Activated B cell treated with CpG ODN at 0.5 μM for 24 hours (primary cell): ENCODE measurements at regions of chr1 and their contacts with region 1.

Region 1: DNA sequence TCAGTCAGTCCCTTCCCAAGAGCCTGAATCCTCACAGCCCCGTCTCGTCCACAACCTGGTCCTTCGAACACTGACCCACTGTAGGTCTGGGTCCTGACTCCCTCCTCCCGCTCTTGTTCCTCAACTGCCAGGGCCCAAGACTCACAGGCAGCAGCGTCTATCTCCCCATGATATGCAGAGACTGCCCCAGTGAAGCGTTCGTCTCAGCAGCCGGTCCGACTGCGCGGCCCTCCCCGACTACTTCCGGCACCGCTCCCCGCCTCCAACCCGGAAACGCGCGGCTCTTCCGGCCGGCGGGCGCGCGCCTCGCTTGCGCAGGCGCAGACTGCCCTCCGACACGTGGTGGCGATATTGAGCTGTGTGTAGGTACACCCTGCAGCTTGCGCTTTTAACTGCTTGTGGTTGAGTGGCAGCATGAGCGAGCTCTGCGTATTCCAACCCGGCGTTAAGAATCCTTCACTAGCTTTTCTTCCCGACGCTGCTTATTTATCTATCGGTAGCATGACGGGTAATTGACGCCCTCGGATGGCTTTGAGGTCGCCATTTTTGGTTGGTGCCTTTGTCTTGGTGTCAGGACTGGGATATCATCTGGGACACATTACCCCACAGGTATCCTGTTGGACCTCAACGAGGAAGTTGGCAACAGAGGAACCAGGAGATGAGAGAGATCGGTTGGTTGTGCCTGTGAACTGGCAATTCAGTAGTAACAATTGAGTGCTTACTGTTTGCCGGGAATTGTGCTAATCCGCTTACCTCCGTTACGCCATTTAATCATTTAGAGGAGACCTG is at the start of gene TAF12:
- DNase-seq: peak; percentile 78
- ATAC-seq: peak; percentile 80
- H3K4me3 Mint-ChIP-seq: peak within 1 kb of the TSS; percentile 96
- H3K27ac Mint-ChIP-seq: peak within 1 kb of the TSS; percentile 97
- H3K4me1 Mint-ChIP-seq: peaks cover 50% of the 10 kb centered on the region
- H3K27me3 Mint-ChIP-seq: no peaks in the 10 kb centered on the region
- CTCF ChIP-seq: no peak
- total RNA-seq, gene TAF12: 17.1 and 18.5 TPM in 2 replicates

Region 2: DNA sequence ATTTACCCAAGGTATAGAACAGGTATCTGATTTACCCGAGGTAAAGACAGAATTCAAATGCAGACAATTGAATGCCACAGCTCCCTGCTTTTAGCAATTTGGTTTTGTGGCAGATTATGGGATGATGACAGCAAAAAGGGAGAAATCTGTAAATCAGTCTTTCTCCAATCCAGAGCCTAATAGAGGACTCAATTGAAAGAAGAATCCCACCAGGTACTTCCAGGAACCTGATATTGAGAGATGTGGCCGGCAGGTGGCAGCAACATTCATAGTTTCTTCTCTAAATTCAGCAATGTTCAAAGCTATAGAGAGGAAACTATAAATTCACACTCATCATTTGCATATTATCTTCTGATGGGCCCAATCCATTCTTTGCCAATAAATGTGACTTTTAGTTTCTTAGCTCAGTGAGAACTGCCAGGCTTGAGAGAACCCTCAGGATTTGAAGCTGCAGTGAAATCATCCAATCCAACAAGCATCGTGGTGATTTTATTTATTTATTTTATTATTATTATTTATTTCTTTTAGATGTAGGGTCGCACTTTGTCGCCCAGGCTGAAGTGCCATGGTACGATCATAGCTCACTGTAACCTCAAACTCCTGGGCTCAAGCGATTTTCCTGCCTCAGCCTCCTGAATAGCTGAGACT is 283.3 kb before region 1 on chr1:
- CTCF ChIA-PET with region 1: interaction called, 4 read pairs
- POLR2A ChIA-PET with region 1: interaction called, 4 read pairs
- intact Hi-C with region 1: loop called (anchors 1 kb)
- DNase-seq: peak; percentile 50
- ATAC-seq: peak; percentile 75
- H3K4me3 Mint-ChIP-seq: no peak overlapping the region
- H3K27ac Mint-ChIP-seq: no peak overlapping the region
- H3K4me1 Mint-ChIP-seq: peaks cover 2% of the 10 kb centered on the region
- H3K27me3 Mint-ChIP-seq: no peaks in the 10 kb centered on the region
- CTCF ChIP-seq: peak; percentile 91

Region 3: GRCh38 chr1:28518000-28518744 is 124.9 kb before region 1 on chr1:
- CTCF ChIA-PET with region 1: no interaction called
- POLR2A ChIA-PET with region 1: interaction called, 11 read pairs
- intact Hi-C with region 1: loop called (anchors 2 kb)
- DNase-seq: peak; percentile 89
- ATAC-seq: peak; percentile 88
- H3K4me3 Mint-ChIP-seq: peak overlapping the region; percentile 90
- H3K27ac Mint-ChIP-seq: peak overlapping the region; percentile 73
- H3K4me1 Mint-ChIP-seq: peaks cover 28% of the 10 kb centered on the region
- H3K27me3 Mint-ChIP-seq: no peaks in the 10 kb centered on the region
- CTCF ChIP-seq: no peak

Region 4: GRCh38 chr1:28602536-28603439 is 40.3 kb before region 1 on chr1:
- CTCF ChIA-PET with region 1: no interaction called
- POLR2A ChIA-PET with region 1: no interaction called
- intact Hi-C with region 1: no loop called
- DNase-seq: no peak
- ATAC-seq: peak; percentile 42
- H3K4me3 Mint-ChIP-seq: no peak overlapping the region
- H3K27ac Mint-ChIP-seq: no peak overlapping the region
- H3K4me1 Mint-ChIP-seq: no peaks in the 10 kb centered on the region
- H3K27me3 Mint-ChIP-seq: no peaks in the 10 kb centered on the region
- CTCF ChIP-seq: peak; percentile 53

Region 5: DNA sequence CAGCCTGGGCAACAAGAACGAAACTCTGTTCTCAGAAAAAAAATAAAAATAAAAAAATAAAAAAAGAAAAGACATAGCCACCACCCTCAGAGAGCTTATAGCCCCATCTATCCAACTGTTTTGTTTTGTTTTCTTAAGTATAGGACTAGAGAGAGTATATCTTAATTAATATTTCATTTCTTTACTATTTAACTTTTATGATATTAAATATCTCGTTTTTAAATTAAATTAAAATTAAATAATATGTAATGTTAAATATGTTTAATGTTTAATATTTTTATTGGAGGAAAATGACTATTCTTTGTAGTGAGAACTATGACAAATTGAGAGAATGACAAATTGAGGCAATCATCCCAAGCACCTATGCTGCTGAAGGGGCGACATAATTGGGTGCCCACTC is 60.6 kb after region 1 on chr1:
- CTCF ChIA-PET with region 1: no interaction called
- POLR2A ChIA-PET with region 1: interaction called, 11 read pairs
- intact Hi-C with region 1: no loop called
- DNase-seq: no peak
- ATAC-seq: no peak
- H3K4me3 Mint-ChIP-seq: no peak overlapping the region
- H3K27ac Mint-ChIP-seq: no peak overlapping the region
- H3K4me1 Mint-ChIP-seq: no peaks in the 10 kb centered on the region
- H3K27me3 Mint-ChIP-seq: no peaks in the 10 kb centered on the region
- CTCF ChIP-seq: no peak

Region 6: GRCh38 chr1:28877132-28877781 is 234.2 kb after region 1 on chr1:
- CTCF ChIA-PET with region 1: interaction called, 14 read pairs
- POLR2A ChIA-PET with region 1: interaction called, 14 read pairs
- intact Hi-C with region 1: loop called (anchors 2 kb)
- DNase-seq: peak; percentile 63
- ATAC-seq: peak; percentile 78
- H3K4me3 Mint-ChIP-seq: no peak overlapping the region
- H3K27ac Mint-ChIP-seq: no peak overlapping the region
- H3K4me1 Mint-ChIP-seq: peaks cover 7% of the 10 kb centered on the region
- H3K27me3 Mint-ChIP-seq: peaks cover 2% of the 10 kb centered on the region
- CTCF ChIP-seq: peak; percentile 88